ENCODE measurements at regions of chr12 and their contacts with region 1.

Region 1: DNA sequence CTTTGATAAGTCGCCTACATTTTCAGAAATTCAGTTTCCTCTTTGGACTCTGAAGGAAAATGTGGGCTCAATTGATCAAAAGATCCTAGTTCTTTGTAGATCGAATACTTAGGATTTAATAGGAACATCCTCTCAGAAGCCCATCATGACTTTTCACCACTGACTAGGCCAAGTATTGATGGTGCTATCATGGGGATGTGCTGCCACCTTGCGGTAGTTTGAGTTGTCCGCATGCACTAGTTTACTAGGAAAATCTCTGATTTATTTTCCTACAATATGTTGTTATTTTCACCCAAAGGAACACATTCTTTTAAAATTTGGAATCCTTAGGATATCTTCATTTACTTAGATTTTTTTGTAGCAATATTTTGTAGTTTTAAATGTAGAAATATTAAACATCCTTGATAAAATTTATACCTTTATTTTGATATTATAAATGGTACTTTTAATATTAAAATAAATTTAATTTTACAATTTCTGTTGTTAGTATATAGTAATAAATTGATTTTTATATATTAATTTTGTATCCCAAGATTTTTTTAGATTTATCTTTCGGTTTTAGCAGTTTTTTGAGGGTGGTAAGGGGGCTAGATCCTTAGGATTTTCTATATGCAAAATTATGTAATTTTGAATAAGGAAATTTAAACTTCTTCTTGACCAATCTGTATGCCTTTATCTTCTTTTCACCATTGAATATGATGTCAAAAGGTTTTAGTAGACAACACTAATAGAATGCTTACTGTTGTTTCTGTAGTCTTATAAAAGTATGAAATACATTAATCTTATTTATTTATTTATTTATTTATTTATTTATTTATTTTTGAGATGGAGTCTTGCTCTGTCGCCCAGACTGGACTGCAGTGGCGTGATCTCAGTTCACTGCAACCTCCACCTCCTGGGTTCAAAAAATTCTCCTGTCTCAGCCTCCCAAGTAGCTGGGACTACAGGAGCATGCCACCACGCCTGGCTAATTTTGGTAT is 52.9 kb upstream of the OR9K2 start:
- DNase-seq: peak; percentile 20
- ATAC-seq: peak; percentile 88
- H3K4me3 ChIP-seq: no peak overlapping the region
- H3K27ac ChIP-seq: no peak overlapping the region
- H3K4me1 ChIP-seq: no peaks in the 10 kb centered on the region
- H3K27me3 ChIP-seq: no peaks in the 10 kb centered on the region
- CTCF ChIP-seq: peak; percentile 72 to 91 (median 73)
- EP300 ChIP-seq: no peak
- POLR2A ChIP-seq: no peak
- RAD21 ChIP-seq: peak; percentile 97

Region 2: GRCh38 chr12:54701940-54702592 is 371.3 kb before region 1 on chr12:
- CTCF ChIA-PET with region 1: interaction called, 43 read pairs
- POLR2A ChIA-PET with region 1: no interaction called
- RAD21 ChIA-PET with region 1: interaction called, 14 read pairs
- SMC1A ChIA-PET with region 1: interaction called, 16 read pairs
- in situ Hi-C with region 1: no loop called
- intact Hi-C with region 1: loop called (anchors 5 kb)
- DNase-seq: no peak
- ATAC-seq: peak; percentile 80
- H3K4me3 ChIP-seq: no peak overlapping the region
- H3K27ac ChIP-seq: no peak overlapping the region
- H3K4me1 ChIP-seq: no peaks in the 10 kb centered on the region
- H3K27me3 ChIP-seq: no peaks in the 10 kb centered on the region; a peak in 3 of 4 replicates
- CTCF ChIP-seq: peak; percentile 49 to 64 (median 52); a peak in 4 of 6 replicates
- EP300 ChIP-seq: no peak
- POLR2A ChIP-seq: no peak
- RAD21 ChIP-seq: peak; percentile 68

Region 3: DNA sequence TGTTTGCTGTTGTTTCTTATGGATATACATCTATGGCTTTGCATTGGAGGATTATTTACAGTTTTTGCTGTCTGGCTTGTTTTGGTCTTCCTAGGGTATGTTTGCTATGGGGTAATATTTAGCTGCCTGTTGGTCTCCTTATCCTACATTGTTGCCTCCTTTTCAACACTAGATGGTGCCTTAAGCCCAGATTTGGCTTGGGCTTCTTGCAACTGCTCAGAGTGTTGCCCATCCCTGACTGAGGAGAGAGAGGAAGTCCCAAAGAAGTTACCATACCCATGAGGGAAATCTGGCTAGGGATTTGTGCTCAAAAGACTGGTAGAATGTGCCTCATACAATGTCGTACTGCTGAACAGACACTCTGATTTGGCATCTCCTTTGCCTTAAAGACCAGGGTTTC is 313.6 kb before region 1 on chr12:
- CTCF ChIA-PET with region 1: interaction called, 27 read pairs
- POLR2A ChIA-PET with region 1: no interaction called
- RAD21 ChIA-PET with region 1: interaction called, 22 read pairs
- SMC1A ChIA-PET with region 1: interaction called, 22 read pairs
- in situ Hi-C with region 1: no loop called
- intact Hi-C with region 1: no loop called
- DNase-seq: peak; percentile 7
- ATAC-seq: peak; percentile 86
- H3K4me3 ChIP-seq: no peak overlapping the region
- H3K27ac ChIP-seq: no peak overlapping the region
- H3K4me1 ChIP-seq: no peaks in the 10 kb centered on the region
- H3K27me3 ChIP-seq: no peaks in the 10 kb centered on the region
- CTCF ChIP-seq: peak; percentile 34 to 48 (median 39); a peak in 5 of 6 replicates
- EP300 ChIP-seq: no peak
- POLR2A ChIP-seq: no peak
- RAD21 ChIP-seq: peak; percentile 72

Region 4: GRCh38 chr12:54935235-54935951 is 137.9 kb before region 1 on chr12:
- CTCF ChIA-PET with region 1: interaction called, 11 read pairs
- POLR2A ChIA-PET with region 1: no interaction called
- RAD21 ChIA-PET with region 1: no interaction called
- SMC1A ChIA-PET with region 1: interaction called, 7 read pairs
- in situ Hi-C with region 1: no loop called
- intact Hi-C with region 1: no loop called
- DNase-seq: peak; percentile 60
- ATAC-seq: peak; percentile 98
- H3K4me3 ChIP-seq: no peak overlapping the region
- H3K27ac ChIP-seq: peak overlapping the region; percentile 60
- H3K4me1 ChIP-seq: peaks cover 5% of the 10 kb centered on the region
- H3K27me3 ChIP-seq: no peaks in the 10 kb centered on the region
- CTCF ChIP-seq: peak in 2 of 3 experiments; percentile 1 to 39; a peak in 2 of 6 replicates
- EP300 ChIP-seq: no peak
- POLR2A ChIP-seq: no peak
- RAD21 ChIP-seq: peak; percentile 63

Region 5: GRCh38 chr12:54950071-54950727 is 123.1 kb before region 1 on chr12:
- CTCF ChIA-PET with region 1: no interaction called
- POLR2A ChIA-PET with region 1: no interaction called
- RAD21 ChIA-PET with region 1: no interaction called
- SMC1A ChIA-PET with region 1: no interaction called
- in situ Hi-C with region 1: no loop called
- intact Hi-C with region 1: no loop called
- DNase-seq: no peak
- ATAC-seq: no peak
- H3K4me3 ChIP-seq: no peak overlapping the region
- H3K27ac ChIP-seq: no peak overlapping the region
- H3K4me1 ChIP-seq: no peaks in the 10 kb centered on the region
- H3K27me3 ChIP-seq: no peaks in the 10 kb centered on the region
- CTCF ChIP-seq: no peak
- EP300 ChIP-seq: no peak
- POLR2A ChIP-seq: no peak
- RAD21 ChIP-seq: no peak

Region 6: GRCh38 chr12:54984658-54985376 is 88.5 kb before region 1 on chr12 and contains the start of gene TESPA1:
- CTCF ChIA-PET with region 1: interaction called, 46 read pairs
- POLR2A ChIA-PET with region 1: no interaction called
- RAD21 ChIA-PET with region 1: interaction called, 12 read pairs
- SMC1A ChIA-PET with region 1: interaction called, 8 read pairs
- in situ Hi-C with region 1: loop called (anchors 5 kb)
- intact Hi-C with region 1: no loop called
- DNase-seq: peak; percentile 90
- ATAC-seq: peak; percentile 95
- H3K4me3 ChIP-seq: peak within 1 kb of the TSS; percentile 80
- H3K27ac ChIP-seq: peak within 1 kb of the TSS; percentile 94
- H3K4me1 ChIP-seq: peaks cover 26% of the 10 kb centered on the region
- H3K27me3 ChIP-seq: no peaks in the 10 kb centered on the region
- CTCF ChIP-seq: no peak
- EP300 ChIP-seq: no peak
- POLR2A ChIP-seq: peak; percentile 91
- RAD21 ChIP-seq: no peak
- polyA plus RNA-seq, gene TESPA1: 13.8 to 16.1 TPM

Region 7: GRCh38 chr12:55060470-55060869 is 12.9 kb before region 1 on chr12:
- CTCF ChIA-PET with region 1: interaction called, 14 read pairs
- POLR2A ChIA-PET with region 1: no interaction called
- RAD21 ChIA-PET with region 1: no interaction called
- SMC1A ChIA-PET with region 1: interaction called, 11 read pairs
- in situ Hi-C with region 1: no loop called
- intact Hi-C with region 1: no loop called
- DNase-seq: peak; percentile 61
- ATAC-seq: peak; percentile 100
- H3K4me3 ChIP-seq: no peak overlapping the region
- H3K27ac ChIP-seq: no peak overlapping the region
- H3K4me1 ChIP-seq: peaks cover 12% of the 10 kb centered on the region
- H3K27me3 ChIP-seq: no peaks in the 10 kb centered on the region; a peak in 1 of 4 replicates
- CTCF ChIP-seq: no peak
- EP300 ChIP-seq: no peak; a peak in 1 of 4 replicates
- POLR2A ChIP-seq: no peak
- RAD21 ChIP-seq: no peak